Upper lobe of right lung (tissue), 1 donor: ENCODE measurements at regions of chr22 and their contacts with region 1.

Region 1: GRCh38 chr22:22942511-22943329 is 55.1 kb downstream of the IGLL5 start:
- DNase-seq: peak; percentile 67
- ATAC-seq: peak; percentile 75
- H3K4me3 ChIP-seq: no peak overlapping the region
- H3K27ac ChIP-seq: no peak overlapping the region
- H3K4me1 ChIP-seq: no peaks in the 10 kb centered on the region
- H3K27me3 ChIP-seq: peaks cover 13% of the 10 kb centered on the region
- CTCF ChIP-seq: peak; percentile 55

Region 2: GRCh38 chr22:22818861-22819855 is 123.6 kb before region 1 on chr22:
- intact Hi-C with region 1: no loop called
- DNase-seq: no peak
- ATAC-seq: peak; percentile 26
- H3K4me3 ChIP-seq: no peak overlapping the region
- H3K27ac ChIP-seq: no peak overlapping the region
- H3K4me1 ChIP-seq: peaks cover 5% of the 10 kb centered on the region
- H3K27me3 ChIP-seq: no peaks in the 10 kb centered on the region
- CTCF ChIP-seq: no peak

Region 3: DNA sequence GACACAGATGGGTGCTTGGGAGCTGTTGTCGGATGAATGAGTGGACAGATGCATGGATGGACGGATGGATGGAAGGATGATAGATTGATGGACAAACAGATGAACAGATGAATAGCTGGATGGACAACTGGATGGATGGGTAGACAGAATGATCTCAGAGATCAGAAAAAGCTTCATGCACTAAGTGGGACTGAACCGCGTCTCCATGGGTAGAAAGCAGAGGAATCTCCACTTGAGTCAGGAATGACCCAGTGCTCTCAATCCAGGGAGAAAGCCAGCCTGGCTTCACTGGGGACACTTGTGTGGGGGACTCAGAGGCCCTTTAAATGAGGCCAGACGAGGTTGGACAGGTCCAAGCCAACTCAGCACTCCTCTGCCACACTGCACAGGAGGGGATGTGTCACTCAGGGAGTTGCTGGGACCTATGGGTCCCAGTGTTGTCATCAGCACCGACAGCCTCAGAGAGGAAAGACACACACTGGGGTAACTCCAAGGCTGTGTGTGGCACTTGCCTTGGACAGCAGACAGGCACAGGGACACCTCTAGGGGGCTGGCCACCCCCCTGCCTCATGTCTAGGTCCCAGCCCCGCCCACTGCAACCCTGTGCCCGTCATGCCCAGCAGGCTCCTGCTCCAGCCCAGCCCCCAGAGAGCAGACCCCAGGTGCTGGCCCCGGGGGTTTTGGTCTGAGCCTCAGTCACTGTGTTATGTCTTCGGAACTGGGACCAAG is 49.5 kb before region 1 on chr22:
- intact Hi-C with region 1: loop called (anchors 5 kb)
- DNase-seq: peak; percentile 41
- ATAC-seq: peak; percentile 6
- H3K4me3 ChIP-seq: no peak overlapping the region
- H3K27ac ChIP-seq: no peak overlapping the region
- H3K4me1 ChIP-seq: no peaks in the 10 kb centered on the region
- H3K27me3 ChIP-seq: peaks cover 38% of the 10 kb centered on the region
- CTCF ChIP-seq: no peak

Region 4: GRCh38 chr22:22995166-22995565 is 52.4 kb after region 1 on chr22:
- intact Hi-C with region 1: no loop called
- DNase-seq: no peak
- ATAC-seq: no peak
- H3K4me3 ChIP-seq: no peak overlapping the region
- H3K27ac ChIP-seq: no peak overlapping the region
- H3K4me1 ChIP-seq: no peaks in the 10 kb centered on the region
- H3K27me3 ChIP-seq: no peaks in the 10 kb centered on the region
- CTCF ChIP-seq: no peak